ENCODE measurements at regions of chr20 and their contacts with region 1.

Region 1: DNA sequence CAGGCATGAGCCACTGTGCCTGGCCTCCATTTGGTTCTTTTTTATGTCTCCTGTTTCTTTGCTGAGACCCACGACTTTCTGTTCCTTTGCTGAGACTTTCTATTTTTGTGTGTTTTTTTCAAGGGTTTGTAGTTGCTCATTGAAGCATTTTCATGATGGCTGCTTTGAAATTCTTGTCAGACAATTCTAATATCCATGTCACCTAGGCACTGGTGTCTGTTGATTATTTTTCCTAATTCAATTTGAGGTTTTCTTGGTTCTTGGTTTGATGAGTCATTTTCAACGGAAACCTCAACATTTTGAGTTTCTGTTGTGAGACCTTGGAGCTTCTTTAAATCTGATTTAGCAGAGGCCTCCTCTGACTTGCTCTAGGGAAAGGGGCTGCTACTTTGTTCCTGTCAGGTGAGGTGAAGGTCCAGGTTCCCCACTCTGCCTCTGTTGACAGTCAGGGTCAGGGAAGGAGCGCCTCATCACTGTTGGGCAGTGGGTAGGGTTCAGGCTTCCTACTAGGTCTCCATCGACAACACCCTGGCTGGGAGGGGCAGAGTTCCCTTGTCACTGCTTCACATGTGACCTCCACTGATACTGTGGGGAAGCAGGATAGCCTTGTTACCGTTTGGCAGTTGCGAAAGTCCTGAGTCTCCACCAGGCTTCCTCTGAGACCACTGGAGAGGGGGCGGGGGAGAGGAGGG is 67.2 kb upstream of the RNF24 start:
- DNase-seq: no peak
- H3K4me3 ChIP-seq: no peak overlapping the region
- H3K4me1 ChIP-seq: peaks cover 7% of the 10 kb centered on the region
- H3K27me3 ChIP-seq: no peaks in the 10 kb centered on the region

Region 2: GRCh38 chr20:3461211-3461771 is 621.3 kb before region 1 on chr20:
- in situ Hi-C with region 1: no loop called
- DNase-seq: no peak
- H3K4me3 ChIP-seq: no peak overlapping the region
- H3K4me1 ChIP-seq: no peaks in the 10 kb centered on the region
- H3K27me3 ChIP-seq: peaks cover 11% of the 10 kb centered on the region

Region 3: GRCh38 chr20:4014031-4014474 is 68.5 kb before region 1 on chr20:
- in situ Hi-C with region 1: loop called (anchors 10 kb)
- DNase-seq: peak; percentile 57 to 66
- H3K4me3 ChIP-seq: peak overlapping the region; percentile 70
- H3K4me1 ChIP-seq: peaks cover 18% of the 10 kb centered on the region
- H3K27me3 ChIP-seq: no peaks in the 10 kb centered on the region

Measured in HAP-1 (cell line).